Activated CD8-positive, alpha-beta T cell treated with anti-CD3 and anti-CD28 coated beads for 36 hours (primary cell): ENCODE measurements at regions of chr22 and their contacts with region 1.

Region 1: DNA sequence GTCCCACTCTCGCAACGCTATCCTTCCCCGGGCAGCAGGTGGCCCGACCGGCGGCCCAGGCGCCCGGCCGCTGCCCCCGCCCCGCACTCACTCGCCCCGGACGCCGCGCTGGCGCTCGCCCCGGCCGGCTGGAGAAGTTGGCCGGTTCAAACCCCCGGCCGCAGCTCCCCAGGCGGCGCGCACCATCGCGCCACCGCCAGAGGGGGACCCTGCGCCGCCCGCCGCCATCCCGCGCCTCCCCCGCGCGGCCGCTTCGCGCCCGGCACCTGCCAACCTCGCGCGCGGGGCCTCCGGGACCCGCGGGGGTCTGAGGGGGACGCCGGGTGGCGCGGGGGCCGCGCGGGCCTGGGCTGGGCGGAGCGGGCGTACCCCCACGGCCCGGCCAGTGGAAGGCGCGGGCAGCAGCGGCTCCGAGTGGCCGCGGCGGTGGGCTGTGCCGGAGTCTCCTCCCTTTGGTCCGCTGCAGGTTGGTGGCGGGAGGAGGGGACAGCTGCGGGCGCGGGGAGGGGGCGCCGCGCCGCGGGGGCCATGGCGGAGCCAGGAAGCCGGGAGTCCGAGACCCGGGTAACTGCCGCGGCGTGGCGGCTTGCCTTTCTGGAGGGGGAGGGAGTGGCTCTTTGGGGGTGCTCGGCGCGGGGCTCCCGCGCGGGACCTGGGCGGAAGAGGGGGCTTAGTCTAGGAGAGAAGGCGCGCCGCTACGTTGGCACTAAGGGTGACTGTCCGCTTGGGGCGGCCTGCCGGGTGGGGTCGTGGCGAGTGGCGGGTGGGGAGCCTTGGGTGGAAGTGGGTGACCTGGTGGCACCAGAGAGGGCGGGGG is at the starts of genes MPST and TST:
- DNase-seq: peak; percentile 31
- ATAC-seq: peak; percentile 73
- H3K4me3 Mint-ChIP-seq: peak within 1 kb of the TSS; percentile 81
- H3K27ac Mint-ChIP-seq: peak within 1 kb of the TSS; percentile 69
- H3K4me1 Mint-ChIP-seq: peaks cover 6% of the 10 kb centered on the region
- H3K27me3 Mint-ChIP-seq: peaks cover 21% of the 10 kb centered on the region
- CTCF ChIP-seq: peak; percentile 6
- total RNA-seq, gene MPST: 8.5 to 9.1 TPM
- total RNA-seq, gene TST: 1.2 to 1.8 TPM

Region 2: GRCh38 chr22:37008365-37008764 is 11.2 kb before region 1 on chr22:
- CTCF ChIA-PET with region 1: interaction called, 10 read pairs
- POLR2A ChIA-PET with region 1: no interaction called
- intact Hi-C with region 1: no loop called
- DNase-seq: no peak
- ATAC-seq: no peak
- H3K4me3 Mint-ChIP-seq: no peak overlapping the region
- H3K27ac Mint-ChIP-seq: no peak overlapping the region
- H3K4me1 Mint-ChIP-seq: no peaks in the 10 kb centered on the region
- H3K27me3 Mint-ChIP-seq: peaks cover 6% of the 10 kb centered on the region
- CTCF ChIP-seq: no peak

Region 3: DNA sequence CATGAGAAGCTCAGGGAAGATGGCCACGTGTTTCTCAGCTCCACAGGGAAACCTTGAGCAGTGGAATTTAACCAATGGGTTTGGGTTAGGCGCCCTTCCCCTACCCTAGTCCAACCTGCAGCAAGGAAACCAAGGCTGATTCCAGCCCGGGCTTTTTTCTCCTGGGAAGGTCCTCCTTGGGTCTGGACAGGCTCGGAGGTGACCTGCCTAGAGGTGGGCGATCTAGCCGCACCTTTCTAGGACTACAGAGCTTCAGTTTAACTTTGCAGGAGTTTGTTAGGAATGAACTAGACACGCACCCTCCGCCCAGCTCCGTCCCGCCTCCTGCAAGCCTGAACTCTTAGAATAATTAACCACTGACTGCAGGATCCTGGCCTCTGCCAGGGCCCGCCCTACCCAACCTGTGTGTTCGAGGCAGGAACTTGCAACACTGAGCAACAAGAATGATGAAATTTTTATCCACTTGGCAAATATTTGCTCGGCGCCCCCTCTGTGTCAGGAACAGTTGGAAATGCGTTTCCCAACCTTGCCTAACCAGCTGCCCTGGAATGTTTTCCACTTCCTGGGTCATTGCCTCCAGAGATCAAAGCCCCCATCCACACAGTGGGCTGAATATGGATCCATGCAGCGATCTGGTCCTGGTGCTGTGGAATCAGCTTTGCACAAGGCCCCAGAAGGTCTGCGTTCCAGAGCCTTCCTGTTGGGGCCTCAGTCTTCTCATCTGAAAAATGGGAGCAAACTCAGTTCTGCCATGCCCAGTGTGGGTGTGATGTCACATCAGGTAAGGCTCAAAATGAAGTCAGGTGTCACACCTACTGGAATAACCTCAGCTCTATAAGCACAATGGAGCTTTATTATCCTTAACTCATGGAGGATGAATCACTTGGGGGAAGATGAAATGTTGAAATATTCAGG is 13.3 kb after region 1 on chr22:
- CTCF ChIA-PET with region 1: interaction called, 18 read pairs
- POLR2A ChIA-PET with region 1: interaction called, 3 read pairs
- intact Hi-C with region 1: no loop called
- DNase-seq: no peak
- ATAC-seq: no peak
- H3K4me3 Mint-ChIP-seq: no peak overlapping the region
- H3K27ac Mint-ChIP-seq: no peak overlapping the region
- H3K4me1 Mint-ChIP-seq: no peaks in the 10 kb centered on the region
- H3K27me3 Mint-ChIP-seq: peaks cover 4% of the 10 kb centered on the region
- CTCF ChIP-seq: no peak

Region 4: DNA sequence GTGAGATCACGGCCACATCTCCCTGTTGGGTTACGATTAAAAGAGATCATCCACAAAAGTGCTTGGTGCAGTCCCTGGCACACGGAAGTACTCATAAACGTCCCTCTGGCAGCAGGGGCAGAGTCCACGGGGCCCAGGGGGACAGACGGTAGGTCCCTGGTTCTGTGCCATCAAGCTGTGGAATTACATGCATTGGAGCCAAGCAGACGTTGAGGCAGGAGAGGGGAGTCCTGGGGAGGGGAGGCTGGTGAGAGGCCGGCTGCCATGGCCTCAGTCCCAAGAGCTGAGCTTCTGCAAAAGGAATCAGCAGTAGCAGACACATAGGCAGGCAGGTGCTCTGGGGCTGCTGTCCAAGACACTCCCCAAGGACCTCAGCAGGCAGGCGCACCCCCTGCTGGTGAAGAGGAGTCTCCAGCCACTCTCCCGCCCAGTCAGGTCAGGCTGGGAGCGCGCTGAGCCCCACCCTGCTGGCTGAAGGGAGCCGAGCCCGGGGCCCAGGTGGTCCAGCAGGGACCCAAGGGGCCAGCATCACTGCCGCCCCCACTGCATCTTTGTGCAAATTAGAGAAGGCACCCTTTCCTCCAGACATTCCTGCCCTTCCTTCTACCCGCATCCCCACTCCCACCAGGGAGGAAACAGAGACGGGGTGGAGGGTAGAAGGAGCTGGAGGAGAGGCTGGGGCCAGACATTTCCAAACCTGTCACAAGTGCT is 24.5 kb after region 1 on chr22:
- CTCF ChIA-PET with region 1: interaction called, 19 read pairs
- POLR2A ChIA-PET with region 1: interaction called, 3 read pairs
- intact Hi-C with region 1: no loop called
- DNase-seq: peak; percentile 74
- ATAC-seq: peak; percentile 90
- H3K4me3 Mint-ChIP-seq: no peak overlapping the region
- H3K27ac Mint-ChIP-seq: no peak overlapping the region
- H3K4me1 Mint-ChIP-seq: peaks cover 21% of the 10 kb centered on the region
- H3K27me3 Mint-ChIP-seq: peaks cover 1% of the 10 kb centered on the region
- CTCF ChIP-seq: peak; percentile 75